MCF 10A (cell line): ENCODE measurements at regions of chr1 and their contacts with region 1.

Region 1: DNA sequence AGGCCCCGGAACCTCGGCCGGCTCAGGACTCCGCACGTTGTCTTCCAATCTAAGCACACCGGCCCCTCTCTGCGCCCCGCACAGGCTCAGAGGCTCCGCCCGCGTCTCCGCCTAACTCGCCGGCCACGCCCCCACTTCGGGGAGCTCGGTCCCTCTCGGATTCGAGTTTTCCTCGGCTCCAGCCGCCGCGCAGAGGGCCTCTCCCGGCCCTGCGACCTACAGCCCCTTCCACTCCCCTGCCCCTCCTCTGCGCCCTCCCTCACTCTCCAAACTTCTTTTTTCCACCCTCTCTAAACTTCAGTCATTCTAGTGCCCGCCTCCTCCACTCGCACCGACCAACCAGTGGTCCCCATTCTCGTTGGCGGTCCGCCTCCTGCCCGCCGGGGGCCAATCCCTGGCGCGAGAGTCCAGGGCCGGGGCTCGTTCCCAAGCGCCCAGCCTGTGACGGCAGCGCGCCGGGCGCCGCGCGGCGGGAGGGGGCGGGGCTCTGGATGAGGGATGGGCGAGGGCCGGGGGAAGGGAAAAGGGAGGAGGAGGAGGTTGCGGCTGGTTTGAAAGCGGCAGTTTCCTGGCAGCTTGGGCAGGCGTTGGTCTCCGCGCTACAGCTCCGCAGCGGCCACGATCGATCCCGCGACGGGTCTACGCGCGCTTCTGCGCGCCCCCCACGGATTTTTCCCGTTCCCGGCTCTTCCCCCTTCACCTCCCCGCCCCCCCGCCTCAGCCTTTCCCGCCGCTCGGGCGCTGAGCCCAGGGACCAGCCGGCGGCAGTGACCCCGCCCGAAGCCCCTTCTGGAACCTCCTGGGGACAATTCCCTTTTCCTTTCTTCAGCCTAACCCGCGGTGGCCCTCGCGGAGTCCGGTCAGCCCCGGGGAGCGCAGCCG is at the start of gene MAGI3:
- DNase-seq: peak; percentile 98
- H3K4me3 Mint-ChIP-seq: peak within 1 kb of the TSS; percentile 93
- H3K27ac Mint-ChIP-seq: peak within 1 kb of the TSS; percentile 76
- H3K4me1 Mint-ChIP-seq: peaks cover 14% of the 10 kb centered on the region
- H3K27me3 Mint-ChIP-seq: no peaks in the 10 kb centered on the region
- CTCF ChIP-seq: no peak
- total RNA-seq, gene MAGI3: 12.8 and 14.3 TPM in 2 replicates

Region 2: DNA sequence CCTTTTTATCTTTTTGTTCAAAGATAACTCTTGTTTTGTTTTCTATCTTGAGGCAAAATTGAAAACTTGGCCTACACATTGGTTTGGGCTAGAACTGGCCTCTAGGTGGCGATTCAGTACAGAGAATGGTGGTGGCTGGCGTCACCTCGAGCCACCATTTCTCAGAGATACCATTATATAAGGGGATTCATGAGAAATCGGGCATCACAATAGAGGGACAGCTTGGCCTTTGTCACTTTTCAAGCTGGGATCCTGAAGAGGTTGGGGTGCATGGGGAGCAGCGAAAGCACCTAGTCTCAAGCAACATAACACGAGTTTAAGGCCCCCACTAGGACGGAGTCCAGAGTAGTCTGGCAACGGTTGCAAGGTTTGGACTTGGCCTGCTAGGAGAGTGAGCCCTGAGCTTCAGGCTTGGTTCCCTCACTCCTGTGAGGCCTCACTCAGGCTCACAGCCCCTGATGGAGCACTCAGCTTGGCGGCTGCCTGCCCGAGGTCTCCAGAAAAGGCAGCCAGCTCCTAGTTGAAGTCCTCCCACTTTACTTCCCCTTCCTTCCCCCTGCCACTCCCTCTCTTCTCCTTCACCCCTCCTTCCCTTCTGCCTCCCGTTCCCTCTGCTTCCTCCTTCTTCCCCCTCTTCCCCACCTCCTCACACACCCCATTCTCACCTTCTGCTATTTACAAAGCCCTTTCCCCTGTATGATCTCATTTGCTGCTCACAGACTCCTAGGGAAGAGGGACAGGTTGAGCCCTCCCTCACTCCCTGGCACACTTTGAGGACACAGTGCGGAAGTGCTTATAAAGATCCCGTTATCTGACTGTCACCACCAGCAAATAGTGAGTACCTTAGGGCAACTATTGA is 249.4 kb before region 1 on chr1:
- CTCF ChIA-PET with region 1: interaction called, 66 read pairs
- POLR2A ChIA-PET with region 1: interaction called, 9 read pairs
- intact Hi-C with region 1: loop called (anchors 1 kb)
- DNase-seq: peak; percentile 69
- H3K4me3 Mint-ChIP-seq: no peak overlapping the region
- H3K27ac Mint-ChIP-seq: no peak overlapping the region
- H3K4me1 Mint-ChIP-seq: peaks cover 20% of the 10 kb centered on the region
- H3K27me3 Mint-ChIP-seq: no peaks in the 10 kb centered on the region
- CTCF ChIP-seq: peak; percentile 84

Region 3: GRCh38 chr1:113333056-113333455 is 57.1 kb before region 1 on chr1:
- CTCF ChIA-PET with region 1: no interaction called
- POLR2A ChIA-PET with region 1: no interaction called
- intact Hi-C with region 1: no loop called
- DNase-seq: no peak
- H3K4me3 Mint-ChIP-seq: no peak overlapping the region
- H3K27ac Mint-ChIP-seq: no peak overlapping the region
- H3K4me1 Mint-ChIP-seq: no peaks in the 10 kb centered on the region
- H3K27me3 Mint-ChIP-seq: no peaks in the 10 kb centered on the region
- CTCF ChIP-seq: no peak

Region 4: GRCh38 chr1:113372546-113372945 is 17.6 kb before region 1 on chr1:
- CTCF ChIA-PET with region 1: no interaction called
- POLR2A ChIA-PET with region 1: interaction called, 10 read pairs
- intact Hi-C with region 1: no loop called
- DNase-seq: no peak
- H3K4me3 Mint-ChIP-seq: no peak overlapping the region
- H3K27ac Mint-ChIP-seq: no peak overlapping the region
- H3K4me1 Mint-ChIP-seq: peaks cover 5% of the 10 kb centered on the region
- H3K27me3 Mint-ChIP-seq: no peaks in the 10 kb centered on the region
- CTCF ChIP-seq: no peak

Region 5: GRCh38 chr1:113452921-113453770 is 63.0 kb after region 1 on chr1:
- CTCF ChIA-PET with region 1: interaction called, 23 read pairs
- POLR2A ChIA-PET with region 1: interaction called, 35 read pairs
- intact Hi-C with region 1: loop called (anchors 2 kb)
- DNase-seq: peak; percentile 65
- H3K4me3 Mint-ChIP-seq: no peak overlapping the region
- H3K27ac Mint-ChIP-seq: peak overlapping the region; percentile 65
- H3K4me1 Mint-ChIP-seq: peaks cover 45% of the 10 kb centered on the region
- H3K27me3 Mint-ChIP-seq: no peaks in the 10 kb centered on the region
- CTCF ChIP-seq: peak; percentile 44

Region 6: DNA sequence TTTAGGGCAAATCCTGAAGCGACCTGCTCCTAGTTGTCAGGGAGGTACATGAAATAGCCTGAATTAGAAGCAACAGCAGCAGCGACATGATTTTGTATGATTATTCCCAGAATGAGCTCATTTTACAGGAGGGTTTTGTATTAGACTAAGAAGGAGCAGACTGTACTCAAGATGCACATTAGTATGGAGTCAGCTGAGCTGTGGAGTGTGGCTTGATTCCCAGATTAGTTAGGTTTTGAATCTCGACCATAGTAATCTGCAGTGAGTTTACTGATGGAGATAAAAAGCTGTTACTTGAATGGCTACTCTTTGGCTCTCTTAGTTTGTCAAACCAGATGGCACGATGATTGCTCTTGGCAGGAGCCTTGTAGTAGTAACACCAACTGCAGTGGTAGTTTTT is 226.0 kb after region 1 on chr1:
- CTCF ChIA-PET with region 1: no interaction called
- POLR2A ChIA-PET with region 1: interaction called, 3 read pairs
- intact Hi-C with region 1: loop called (anchors 5 kb)
- DNase-seq: no peak
- H3K4me3 Mint-ChIP-seq: no peak overlapping the region
- H3K27ac Mint-ChIP-seq: no peak overlapping the region
- H3K4me1 Mint-ChIP-seq: peaks cover 12% of the 10 kb centered on the region
- H3K27me3 Mint-ChIP-seq: no peaks in the 10 kb centered on the region
- CTCF ChIP-seq: no peak

Region 7: GRCh38 chr1:113759333-113760101 is 369.3 kb after region 1 on chr1 and contains the start of gene PHTF1:
- CTCF ChIA-PET with region 1: no interaction called
- POLR2A ChIA-PET with region 1: interaction called, 7 read pairs
- intact Hi-C with region 1: loop called (anchors 10 kb)
- DNase-seq: peak; percentile 69
- H3K4me3 Mint-ChIP-seq: peak within 1 kb of the TSS; percentile 73
- H3K27ac Mint-ChIP-seq: peak within 1 kb of the TSS; percentile 73
- H3K4me1 Mint-ChIP-seq: peaks cover 13% of the 10 kb centered on the region
- H3K27me3 Mint-ChIP-seq: no peaks in the 10 kb centered on the region
- CTCF ChIP-seq: no peak
- total RNA-seq, gene PHTF1: 8.4 and 13.0 TPM in 2 replicates